OCI-LY7 (cell line): ENCODE measurements at regions of chr3 and their contacts with region 1.

Region 1: DNA sequence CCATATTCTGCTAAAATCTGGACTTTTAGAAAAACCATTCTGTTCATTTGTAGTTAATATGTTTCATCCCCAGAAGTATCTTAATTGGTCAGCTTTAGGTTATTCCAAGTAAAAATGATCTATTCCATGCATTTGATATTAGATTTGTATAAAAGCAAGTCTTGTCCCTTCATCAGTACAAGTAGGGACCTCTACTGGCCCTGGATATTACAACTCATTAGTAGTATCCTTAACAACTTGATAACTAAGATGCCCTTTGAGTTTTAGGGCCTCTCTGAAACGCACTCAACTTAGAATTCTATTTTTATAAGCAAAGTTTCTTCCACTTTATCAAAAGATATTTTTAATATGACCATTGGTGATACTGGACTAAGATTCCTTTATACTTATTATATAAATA is 25.3 kb upstream of the SELENOT start:
- DNase-seq: no peak
- H3K4me3 ChIP-seq: no peak overlapping the region
- H3K27ac ChIP-seq: no peak overlapping the region
- H3K4me1 ChIP-seq: no peaks in the 10 kb centered on the region
- CTCF ChIP-seq: peak; percentile 49

Region 2: GRCh38 chr3:150567328-150567727 is 10.5 kb before region 1 on chr3:
- CTCF ChIA-PET with region 1: no interaction called
- POLR2A ChIA-PET with region 1: interaction called, 12 read pairs
- intact Hi-C with region 1: no loop called
- DNase-seq: no peak
- H3K4me3 ChIP-seq: no peak overlapping the region
- H3K27ac ChIP-seq: no peak overlapping the region
- H3K4me1 ChIP-seq: no peaks in the 10 kb centered on the region
- CTCF ChIP-seq: no peak